ENCODE measurements at regions of chr3 and their contacts with region 1.

Region 1: GRCh38 chr3:71305231-71306206 is 278.0 kb downstream of the FOXP1 start:
- DNase-seq: peak; percentile 13
- H3K4me3 Mint-ChIP-seq: peak overlapping the region; percentile 89
- H3K27ac Mint-ChIP-seq: peak overlapping the region; percentile 87
- H3K4me1 Mint-ChIP-seq: peaks cover 81% of the 10 kb centered on the region
- H3K27me3 Mint-ChIP-seq: no peaks in the 10 kb centered on the region

Region 2: DNA sequence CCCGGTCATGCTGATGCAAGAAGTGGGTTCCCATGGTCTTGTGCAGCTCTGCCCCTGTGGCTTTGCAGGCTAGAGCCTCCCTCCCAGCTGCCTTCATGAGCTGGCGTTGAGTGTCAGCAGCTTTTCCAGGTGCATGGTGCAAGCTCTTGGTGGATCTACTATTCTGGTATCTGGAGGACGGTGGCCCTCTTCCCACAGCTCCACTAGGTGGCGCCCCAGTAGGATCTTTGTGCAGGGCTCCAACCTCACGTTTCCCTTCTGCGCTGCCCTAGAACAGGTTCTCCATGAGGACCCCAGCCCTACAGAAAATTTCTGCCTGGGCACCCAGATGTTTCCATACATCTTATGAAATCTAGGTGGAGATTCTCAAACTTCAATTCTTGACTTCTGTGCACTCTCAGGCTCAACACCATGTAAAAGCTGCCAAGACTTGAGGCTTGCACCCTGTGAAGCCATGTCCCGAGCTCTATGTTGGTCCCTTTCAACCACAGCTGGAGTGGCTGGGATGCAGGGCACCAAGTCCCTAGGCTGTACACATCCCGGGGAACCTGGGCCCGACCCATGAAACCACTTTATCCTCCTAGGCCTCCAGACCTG is 754.7 kb before region 1 on chr3:
- intact Hi-C with region 1: loop called (anchors 2 kb)
- DNase-seq: peak; percentile 44
- H3K4me3 Mint-ChIP-seq: no peak overlapping the region
- H3K27ac Mint-ChIP-seq: no peak overlapping the region
- H3K4me1 Mint-ChIP-seq: no peaks in the 10 kb centered on the region
- H3K27me3 Mint-ChIP-seq: peaks cover 22% of the 10 kb centered on the region

Region 3: DNA sequence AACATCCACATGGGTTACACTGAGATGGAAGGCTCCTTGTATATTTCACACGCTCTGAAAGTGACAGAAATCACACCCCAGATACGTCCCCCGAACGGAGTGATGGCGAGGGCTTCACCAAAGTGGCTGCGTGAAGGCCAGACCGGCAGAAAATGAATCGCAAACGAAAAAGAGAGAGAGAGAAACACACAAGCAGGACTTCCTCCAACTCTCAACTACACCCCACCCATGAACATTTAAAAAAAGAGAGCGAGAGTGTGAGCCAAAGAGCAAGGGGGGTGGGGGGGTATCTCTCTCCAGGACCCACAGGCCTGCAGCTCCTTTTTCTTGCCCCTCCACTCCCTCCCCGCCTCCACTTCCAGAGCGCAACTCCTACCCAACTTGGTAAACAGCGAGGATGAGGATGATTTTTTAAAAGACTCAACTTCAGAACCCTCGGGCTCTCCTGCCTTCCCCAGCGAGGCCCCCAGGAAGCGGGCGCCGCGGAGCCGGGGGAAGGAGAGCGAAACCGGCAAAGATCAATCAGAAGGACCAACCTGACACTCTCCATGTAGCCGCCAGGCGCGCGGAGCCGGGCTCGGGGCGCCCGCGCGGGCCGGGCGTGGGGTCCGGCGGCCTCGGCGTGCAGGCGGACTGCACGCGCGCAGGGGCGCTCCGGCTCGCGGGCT is 241.1 kb before region 1 on chr3:
- intact Hi-C with region 1: loop called (anchors 1 kb)
- DNase-seq: peak; percentile 68
- H3K4me3 Mint-ChIP-seq: no peak overlapping the region
- H3K27ac Mint-ChIP-seq: no peak overlapping the region
- H3K4me1 Mint-ChIP-seq: peaks cover 58% of the 10 kb centered on the region
- H3K27me3 Mint-ChIP-seq: no peaks in the 10 kb centered on the region

Region 4: GRCh38 chr3:71195492-71195891 is 110.0 kb before region 1 on chr3:
- intact Hi-C with region 1: loop called (anchors 2 kb)
- DNase-seq: no peak
- H3K4me3 Mint-ChIP-seq: no peak overlapping the region
- H3K27ac Mint-ChIP-seq: no peak overlapping the region
- H3K4me1 Mint-ChIP-seq: peaks cover 53% of the 10 kb centered on the region
- H3K27me3 Mint-ChIP-seq: no peaks in the 10 kb centered on the region

Region 5: DNA sequence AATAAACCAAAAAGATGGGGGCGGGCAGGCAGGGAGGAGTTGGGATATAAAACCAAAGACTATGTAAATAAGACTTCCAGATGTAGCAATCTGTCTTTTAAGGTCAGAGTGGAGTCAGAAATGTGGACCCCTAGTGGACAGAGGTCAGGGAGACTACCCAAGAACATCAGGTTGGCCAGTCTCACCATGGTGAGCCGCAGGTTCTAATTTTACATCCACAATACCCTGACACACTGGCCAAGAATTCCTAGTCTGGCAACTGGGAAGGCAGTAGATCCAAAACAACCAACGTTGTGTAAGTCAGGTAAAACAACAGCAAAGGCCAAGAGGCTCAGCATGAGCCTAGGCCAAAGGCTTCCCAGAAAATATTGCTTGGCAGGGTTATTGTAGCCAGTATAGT is 74.6 kb after region 1 on chr3:
- intact Hi-C with region 1: loop called (anchors 2 kb)
- DNase-seq: no peak
- H3K4me3 Mint-ChIP-seq: no peak overlapping the region
- H3K27ac Mint-ChIP-seq: peak overlapping the region; percentile 68
- H3K4me1 Mint-ChIP-seq: peaks cover 56% of the 10 kb centered on the region
- H3K27me3 Mint-ChIP-seq: no peaks in the 10 kb centered on the region

Region 6: DNA sequence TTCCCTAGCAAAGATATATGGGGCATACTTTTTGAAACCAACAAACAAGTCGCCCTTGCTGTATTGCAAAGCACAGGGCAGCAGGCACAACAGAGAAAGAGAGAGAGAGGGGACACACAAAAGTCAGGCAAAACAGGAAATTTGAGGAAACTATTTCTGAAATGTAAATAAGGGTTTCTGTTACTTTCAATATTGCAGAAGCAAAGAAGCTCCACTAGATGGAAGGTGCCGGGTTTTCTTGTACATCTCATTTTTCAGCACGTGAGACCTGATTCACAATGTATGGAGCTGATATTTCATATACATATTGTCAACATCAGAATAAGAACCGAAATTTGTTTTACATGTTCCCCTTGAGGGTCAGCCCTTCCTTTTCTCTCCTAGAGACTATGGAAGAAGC is 150.6 kb after region 1 on chr3:
- intact Hi-C with region 1: loop called (anchors 2 kb)
- DNase-seq: no peak
- H3K4me3 Mint-ChIP-seq: peak overlapping the region; percentile 70
- H3K27ac Mint-ChIP-seq: peak overlapping the region; percentile 89
- H3K4me1 Mint-ChIP-seq: peaks cover 85% of the 10 kb centered on the region
- H3K27me3 Mint-ChIP-seq: no peaks in the 10 kb centered on the region

Region 7: DNA sequence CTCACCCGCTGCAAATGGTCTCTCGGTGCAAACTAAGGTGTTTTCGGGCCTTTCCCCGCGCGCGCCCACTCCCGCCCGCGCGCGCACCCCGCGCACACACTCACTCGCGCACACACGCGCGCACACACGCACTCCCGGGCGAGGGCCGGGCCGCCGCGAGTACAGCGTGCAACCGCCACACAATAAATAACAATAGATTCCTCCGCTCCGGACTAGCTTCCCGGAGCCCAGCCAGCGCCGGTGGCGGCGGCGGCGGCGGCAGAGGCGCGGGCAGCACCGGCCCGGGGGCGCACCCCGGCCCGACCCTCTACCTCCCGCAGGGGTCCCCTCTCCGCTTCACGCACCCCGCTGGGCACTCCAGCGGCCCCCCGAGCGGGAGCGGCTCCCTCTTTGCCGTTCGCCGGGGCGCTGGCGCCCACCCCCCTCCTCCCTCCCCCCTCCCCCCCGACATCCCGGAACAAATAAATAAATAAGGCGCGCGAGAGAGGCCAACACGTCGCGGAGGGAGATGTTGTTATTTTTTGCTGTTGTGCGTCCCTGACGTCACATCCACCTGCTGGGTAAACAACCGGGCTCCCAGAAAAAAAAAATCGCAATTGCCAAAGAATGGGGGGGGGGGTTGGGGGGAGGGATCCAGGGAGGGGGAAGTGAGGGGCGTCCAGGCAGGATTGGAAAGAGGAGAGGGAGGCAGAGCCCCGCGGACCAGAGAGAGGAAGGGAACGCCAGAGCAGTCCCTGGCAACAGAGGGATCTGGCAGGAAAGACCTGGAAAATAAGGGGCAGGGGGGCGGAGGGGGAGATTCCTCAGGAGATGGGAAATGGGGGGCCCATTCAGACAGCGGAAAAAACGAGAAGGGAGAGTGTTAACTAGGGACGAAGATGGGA is 278.3 kb after region 1 on chr3 and contains the start of gene FOXP1:
- intact Hi-C with region 1: loop called (anchors 1 kb)
- DNase-seq: peak; percentile 57
- H3K4me3 Mint-ChIP-seq: peak within 1 kb of the TSS; percentile 91
- H3K27ac Mint-ChIP-seq: peak within 1 kb of the TSS; percentile 95
- H3K4me1 Mint-ChIP-seq: peaks cover 52% of the 10 kb centered on the region
- H3K27me3 Mint-ChIP-seq: no peaks in the 10 kb centered on the region
- total RNA-seq, gene FOXP1: 132 and 138 TPM in 2 replicates